ENCODE measurements at regions of chr7 and their contacts with region 1.

Region 1: GRCh38 chr7:86939197-86939814 is 120.1 kb downstream of the ELAPOR2 start:
- DNase-seq: no peak
- ATAC-seq: peak; percentile 40 to 88 (median 71)
- H3K4me3 ChIP-seq: no peak overlapping the region
- H3K27ac ChIP-seq: no peak overlapping the region
- H3K4me1 ChIP-seq: no peaks in the 10 kb centered on the region
- H3K27me3 ChIP-seq: no peaks in the 10 kb centered on the region
- CTCF ChIP-seq: peak; percentile 81

Region 2: GRCh38 chr7:87152107-87152844 is 213.0 kb after region 1 on chr7 and contains the start of gene DMTF1:
- intact Hi-C with region 1: loop called (anchors 1 to 5 kb)
- DNase-seq: peak; percentile 95 to 98
- ATAC-seq: peak; percentile 94 to 98 (median 96)
- H3K4me3 ChIP-seq: peak within 1 kb of the TSS; percentile 78
- H3K27ac ChIP-seq: peak within 1 kb of the TSS; percentile 96
- H3K4me1 ChIP-seq: peaks cover 55% of the 10 kb centered on the region
- H3K27me3 ChIP-seq: no peaks in the 10 kb centered on the region
- CTCF ChIP-seq: no peak
- total RNA-seq, gene DMTF1: 12.5 to 25.3 (median 20.5) TPM

Region 3: GRCh38 chr7:87234949-87235348 is 295.6 kb after region 1 on chr7:
- intact Hi-C with region 1: loop called in 1 of 2 experiments (anchors 5 kb)
- DNase-seq: no peak
- ATAC-seq: no peak
- H3K4me3 ChIP-seq: no peak overlapping the region
- H3K27ac ChIP-seq: no peak overlapping the region
- H3K4me1 ChIP-seq: peaks cover 3% of the 10 kb centered on the region
- H3K27me3 ChIP-seq: no peaks in the 10 kb centered on the region
- CTCF ChIP-seq: no peak

Region 4: DNA sequence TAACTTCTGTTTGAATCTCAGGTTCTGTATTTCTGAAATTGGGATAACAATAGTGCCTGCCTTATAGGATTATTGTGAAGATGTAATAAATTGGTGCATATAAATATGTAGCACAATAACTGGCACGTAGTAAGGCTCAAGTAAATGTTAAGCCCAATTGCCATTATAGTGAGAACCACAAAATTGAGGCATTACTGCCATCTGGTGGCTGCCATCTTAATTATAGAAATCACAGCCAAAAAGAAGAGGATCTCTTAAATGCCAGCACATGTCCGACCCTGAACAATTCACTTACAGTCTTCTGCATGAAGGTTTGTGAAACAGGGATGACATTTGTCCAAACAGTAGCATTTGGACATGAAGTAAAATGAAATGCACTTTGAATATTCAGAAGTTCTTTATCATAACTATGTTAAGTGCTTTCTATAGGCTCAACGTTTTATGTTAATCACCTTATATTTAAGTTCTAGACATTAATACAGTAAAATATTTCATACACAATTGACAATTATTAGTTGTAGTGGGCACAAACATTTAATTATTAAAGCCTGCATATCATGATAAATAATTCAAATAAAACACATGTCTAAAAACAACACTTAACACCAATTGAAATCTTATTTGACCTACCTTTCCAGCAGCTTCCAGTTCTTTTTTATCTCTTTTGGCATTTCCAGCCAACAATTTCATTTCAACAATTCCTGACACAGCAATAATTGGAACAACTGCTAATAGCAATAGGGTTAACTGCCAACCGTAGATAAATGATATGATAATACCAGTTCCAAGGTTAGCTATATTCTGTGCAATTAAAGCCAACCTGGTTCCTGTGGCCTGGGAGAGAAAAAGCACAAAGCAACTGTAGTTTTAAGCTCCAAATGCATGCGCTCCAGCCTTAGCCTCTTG is 477.6 kb after region 1 on chr7:
- intact Hi-C with region 1: loop called in 1 of 2 experiments (anchors 10 kb)
- DNase-seq: peak in 1 of 2 donors; percentile 14
- ATAC-seq: peak; percentile 24 to 70 (median 46)
- H3K4me3 ChIP-seq: no peak overlapping the region
- H3K27ac ChIP-seq: no peak overlapping the region
- H3K4me1 ChIP-seq: peaks cover 16% of the 10 kb centered on the region
- H3K27me3 ChIP-seq: no peaks in the 10 kb centered on the region
- CTCF ChIP-seq: peak; percentile 72